ENCODE measurements at regions of chrX and their contacts with region 1.

Region 1: DNA sequence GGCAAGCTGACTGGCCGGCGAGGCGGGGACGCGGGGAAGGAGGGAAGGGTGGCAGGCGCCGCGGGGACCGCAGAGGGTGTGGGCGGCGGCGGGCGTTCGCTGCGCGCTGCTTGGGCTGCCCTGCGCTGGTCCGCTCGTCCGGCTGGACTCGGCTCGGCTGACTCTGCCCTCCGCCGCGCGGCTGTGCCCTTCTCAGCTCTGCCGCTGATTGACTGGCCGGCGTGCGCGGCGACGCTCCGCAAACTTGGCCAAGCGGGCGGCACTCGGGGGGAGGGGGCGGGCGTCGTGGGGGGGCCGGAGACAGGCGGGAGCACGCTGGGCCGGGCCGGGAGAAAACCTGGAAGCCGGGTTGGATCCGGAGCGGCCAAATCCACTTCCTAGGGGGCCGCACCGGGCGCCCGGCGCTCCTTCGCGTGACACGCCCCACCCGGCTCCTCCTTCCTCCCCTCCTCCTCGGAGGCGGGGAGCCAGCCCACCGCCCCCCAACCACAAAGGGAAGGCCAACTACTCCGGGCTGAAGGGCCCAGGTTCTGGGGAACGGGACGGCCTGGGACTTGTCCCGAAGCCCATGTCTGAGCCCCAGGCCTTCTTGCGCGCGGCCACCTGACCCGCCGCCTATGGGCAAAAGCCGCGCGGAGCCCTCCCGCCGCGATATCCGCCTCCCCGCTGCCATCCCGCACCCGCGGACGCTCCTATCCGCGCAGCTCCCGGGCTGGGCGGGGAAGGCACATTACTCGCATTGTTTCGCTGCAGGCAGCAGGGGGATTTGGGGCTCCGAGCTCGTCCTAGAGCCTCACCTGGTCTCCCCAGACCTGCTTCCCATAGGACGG is at the start of gene GPC4:
- DNase-seq: peak in 1 of 2 experiments; percentile 49
- H3K4me3 ChIP-seq: peak within 1 kb of the TSS; percentile 76
- H3K27ac ChIP-seq: no peak within 1 kb of the TSS
- H3K4me1 ChIP-seq: peaks cover 5% of the 10 kb centered on the region; the same call in 1 of the 2 replicates
- H3K27me3 ChIP-seq: peaks cover 32% of the 10 kb centered on the region
- CTCF ChIP-seq: no peak
- total RNA-seq, gene GPC4: 4.4 and 4.7 TPM in 2 replicates

Region 2: GRCh38 chrX:133254666-133255065 is 160.8 kb before region 1 on chrX:
- CTCF ChIA-PET with region 1: no interaction called
- POLR2A ChIA-PET with region 1: no interaction called
- intact Hi-C with region 1: no loop called
- DNase-seq: peak in 1 of 2 experiments; percentile 70
- H3K4me3 ChIP-seq: no peak overlapping the region
- H3K27ac ChIP-seq: no peak overlapping the region
- H3K4me1 ChIP-seq: peaks cover 11% of the 10 kb centered on the region; the same call in 1 of the 2 replicates
- H3K27me3 ChIP-seq: no peaks in the 10 kb centered on the region
- CTCF ChIP-seq: no peak

Region 3: GRCh38 chrX:133307637-133308500 is 107.6 kb before region 1 on chrX:
- CTCF ChIA-PET with region 1: no interaction called
- POLR2A ChIA-PET with region 1: no interaction called
- intact Hi-C with region 1: no loop called
- DNase-seq: no peak
- H3K4me3 ChIP-seq: no peak overlapping the region
- H3K27ac ChIP-seq: no peak overlapping the region
- H3K4me1 ChIP-seq: no peaks in the 10 kb centered on the region
- H3K27me3 ChIP-seq: 0 out of 2 replicates have a peak, but pooled peaks cover 4% of the 10 kb centered on the region
- CTCF ChIP-seq: no peak

Region 4: DNA sequence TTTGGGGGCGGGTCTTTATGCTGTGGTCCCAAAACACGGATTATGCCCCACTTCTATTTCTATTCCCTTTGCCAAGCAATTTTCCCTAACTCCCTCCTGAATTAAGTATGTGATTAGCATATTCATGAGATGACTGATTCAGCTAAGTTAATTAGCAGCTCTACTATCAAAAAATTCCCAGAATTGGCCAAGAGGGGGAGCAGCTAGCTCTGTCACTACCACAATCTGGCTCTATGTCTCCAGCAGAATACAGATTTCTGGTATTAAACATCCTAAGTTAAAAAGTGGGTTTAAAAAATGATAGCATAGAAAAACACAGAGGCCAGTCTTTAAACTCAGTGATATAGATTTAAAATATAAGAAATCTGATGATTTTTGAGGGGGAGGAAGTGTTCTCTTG is 80.5 kb before region 1 on chrX:
- CTCF ChIA-PET with region 1: no interaction called
- POLR2A ChIA-PET with region 1: no interaction called
- intact Hi-C with region 1: loop called (anchors 5 kb)
- DNase-seq: peak in 1 of 2 experiments; percentile 22
- H3K4me3 ChIP-seq: no peak overlapping the region
- H3K27ac ChIP-seq: no peak overlapping the region
- H3K4me1 ChIP-seq: no peaks in the 10 kb centered on the region
- H3K27me3 ChIP-seq: no peaks in the 10 kb centered on the region
- CTCF ChIP-seq: peak; percentile 83

Region 5: GRCh38 chrX:133402042-133402453 is 13.4 kb before region 1 on chrX:
- CTCF ChIA-PET with region 1: no interaction called
- POLR2A ChIA-PET with region 1: no interaction called
- intact Hi-C with region 1: no loop called
- DNase-seq: no peak
- H3K4me3 ChIP-seq: no peak overlapping the region
- H3K27ac ChIP-seq: no peak overlapping the region
- H3K4me1 ChIP-seq: no peaks in the 10 kb centered on the region
- H3K27me3 ChIP-seq: no peaks in the 10 kb centered on the region
- CTCF ChIP-seq: no peak

Region 6: GRCh38 chrX:133444951-133445831 is 29.7 kb after region 1 on chrX:
- CTCF ChIA-PET with region 1: no interaction called
- POLR2A ChIA-PET with region 1: no interaction called
- intact Hi-C with region 1: loop called (anchors 1 kb)
- DNase-seq: peak; percentile 41 to 43
- H3K4me3 ChIP-seq: peak overlapping the region; percentile 54; the same call in 1 of the 2 replicates
- H3K27ac ChIP-seq: no peak overlapping the region
- H3K4me1 ChIP-seq: no peaks in the 10 kb centered on the region
- H3K27me3 ChIP-seq: no peaks in the 10 kb centered on the region
- CTCF ChIP-seq: no peak

Region 7: DNA sequence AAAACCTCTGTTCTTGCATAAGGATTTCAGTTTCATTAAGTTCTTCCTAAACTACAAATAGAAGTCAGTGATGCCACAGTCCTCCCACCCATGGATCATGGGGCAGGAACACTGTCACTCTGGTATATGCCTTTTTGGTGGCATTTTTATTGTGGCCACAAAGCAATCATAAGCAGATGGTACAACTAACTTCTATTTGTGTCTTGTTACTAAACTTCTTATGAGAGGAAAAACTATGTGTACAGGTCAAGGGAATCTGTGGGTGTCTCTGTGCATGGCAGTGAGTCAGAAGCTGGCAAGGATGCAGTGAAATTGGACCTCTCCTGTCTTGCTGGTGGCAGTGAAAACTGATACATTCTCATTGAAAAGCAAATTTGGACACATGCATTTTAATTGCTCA is 244.8 kb after region 1 on chrX:
- CTCF ChIA-PET with region 1: no interaction called
- POLR2A ChIA-PET with region 1: no interaction called
- intact Hi-C with region 1: loop called (anchors 10 kb)
- DNase-seq: peak; percentile 29 to 80
- H3K4me3 ChIP-seq: no peak overlapping the region
- H3K27ac ChIP-seq: peak overlapping the region; percentile 58
- H3K4me1 ChIP-seq: peaks cover 32% of the 10 kb centered on the region
- H3K27me3 ChIP-seq: no peaks in the 10 kb centered on the region
- CTCF ChIP-seq: no peak

Measured in PC-9 (cell line).